Activated CD4-positive, alpha-beta T cell treated with anti-CD3 and anti-CD28 coated beads, Interleukin-2, amount 10 ng/mL, durations not matched to agents 24 days and 14 days (primary cell): ENCODE measurements at regions of chr16 and their contacts with region 1.

Region 1: DNA sequence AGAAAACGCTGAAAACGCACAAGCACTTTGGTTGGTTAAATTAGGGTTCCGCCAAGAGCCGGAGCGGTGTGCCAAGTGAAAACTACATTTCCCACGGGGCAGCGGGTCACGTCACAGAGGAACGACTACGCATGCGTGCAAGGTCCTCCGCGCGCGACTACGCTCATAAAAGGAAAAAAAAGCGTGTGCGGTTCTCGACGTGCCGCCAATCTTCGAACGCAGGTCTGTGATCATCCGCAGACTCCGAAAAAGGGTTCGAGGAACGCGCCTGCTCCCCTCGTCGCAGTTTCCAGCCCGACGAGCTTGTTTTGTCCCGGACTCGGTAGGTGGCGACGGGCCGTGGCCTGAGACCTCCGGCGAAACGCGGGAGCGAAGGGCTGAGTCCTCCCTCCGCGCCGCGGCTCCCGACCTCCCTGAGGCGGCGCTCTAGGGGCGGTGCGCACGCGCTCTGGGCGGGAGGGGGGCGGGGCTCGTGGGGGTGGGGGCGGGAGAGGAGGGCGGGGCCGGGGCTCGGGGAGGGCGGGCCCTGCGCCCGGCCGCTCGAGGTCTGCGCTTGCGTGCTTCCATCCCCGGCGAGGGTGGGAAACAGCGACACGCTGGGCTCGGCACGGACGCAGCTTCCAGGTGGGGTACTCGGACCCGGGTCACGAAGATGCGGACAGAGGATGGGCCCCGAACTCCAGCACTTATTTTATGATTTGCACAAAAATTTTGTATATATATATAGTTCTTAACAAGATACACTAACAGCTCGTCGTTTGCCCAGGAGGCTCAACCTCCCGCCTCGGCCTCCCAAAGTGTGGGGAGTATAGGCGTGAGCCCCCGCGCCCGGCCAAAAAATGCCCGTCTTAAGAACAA is at the start of gene SGF29:
- DNase-seq: peak; percentile 98
- H3K4me3 Mint-ChIP-seq: peak within 1 kb of the TSS; percentile 95
- H3K27ac Mint-ChIP-seq: peak within 1 kb of the TSS; percentile 99
- H3K4me1 Mint-ChIP-seq: peaks cover 26% of the 10 kb centered on the region
- H3K27me3 Mint-ChIP-seq: no peaks in the 10 kb centered on the region
- total RNA-seq, gene SGF29: 33.6 and 42.5 TPM in 2 replicates

Region 2: GRCh38 chr16:28291873-28292660 is 261.9 kb before region 1 on chr16 and contains the start of gene SBK1:
- intact Hi-C with region 1: loop called (anchors 10 kb)
- DNase-seq: peak; percentile 96
- H3K4me3 Mint-ChIP-seq: peak within 1 kb of the TSS; percentile 83
- H3K27ac Mint-ChIP-seq: peak within 1 kb of the TSS; percentile 70
- H3K4me1 Mint-ChIP-seq: peaks cover 42% of the 10 kb centered on the region
- H3K27me3 Mint-ChIP-seq: peaks cover 26% of the 10 kb centered on the region
- total RNA-seq, gene SBK1: 0.85 and 1.5 TPM in 2 replicates

Region 3: DNA sequence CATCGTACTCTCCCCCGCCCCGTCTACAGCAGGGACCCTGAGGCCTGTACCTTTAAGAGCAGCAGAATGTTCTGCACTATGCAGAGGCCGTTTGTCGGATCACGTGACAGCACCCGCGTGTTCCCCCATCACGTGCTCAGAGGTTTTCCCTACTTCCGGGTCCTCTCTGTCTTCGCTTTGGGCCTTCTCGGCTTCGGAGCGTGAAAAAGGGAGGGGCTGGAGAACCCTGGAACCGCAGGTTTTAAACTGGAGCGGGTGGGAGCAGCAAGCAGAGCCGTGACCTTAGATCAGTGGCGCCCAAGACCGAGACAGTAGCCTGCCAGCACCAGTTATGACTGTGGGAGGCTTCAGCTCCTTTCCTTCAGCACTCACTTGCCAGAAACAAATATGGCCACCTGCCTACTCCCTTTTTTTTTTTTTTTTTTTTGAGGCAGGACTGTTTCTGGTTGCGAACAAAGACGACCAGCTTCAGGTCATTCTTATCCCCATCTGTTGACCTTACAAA is 62.0 kb before region 1 on chr16 and contains the start of gene CLN3:
- intact Hi-C with region 1: loop called (anchors 1 kb)
- DNase-seq: peak; percentile 96
- H3K4me3 Mint-ChIP-seq: peak within 1 kb of the TSS; percentile 97
- H3K27ac Mint-ChIP-seq: peak within 1 kb of the TSS; percentile 100
- H3K4me1 Mint-ChIP-seq: peaks cover 59% of the 10 kb centered on the region
- H3K27me3 Mint-ChIP-seq: no peaks in the 10 kb centered on the region
- total RNA-seq, gene CLN3: 26.1 and 27.7 TPM in 2 replicates

Region 4: DNA sequence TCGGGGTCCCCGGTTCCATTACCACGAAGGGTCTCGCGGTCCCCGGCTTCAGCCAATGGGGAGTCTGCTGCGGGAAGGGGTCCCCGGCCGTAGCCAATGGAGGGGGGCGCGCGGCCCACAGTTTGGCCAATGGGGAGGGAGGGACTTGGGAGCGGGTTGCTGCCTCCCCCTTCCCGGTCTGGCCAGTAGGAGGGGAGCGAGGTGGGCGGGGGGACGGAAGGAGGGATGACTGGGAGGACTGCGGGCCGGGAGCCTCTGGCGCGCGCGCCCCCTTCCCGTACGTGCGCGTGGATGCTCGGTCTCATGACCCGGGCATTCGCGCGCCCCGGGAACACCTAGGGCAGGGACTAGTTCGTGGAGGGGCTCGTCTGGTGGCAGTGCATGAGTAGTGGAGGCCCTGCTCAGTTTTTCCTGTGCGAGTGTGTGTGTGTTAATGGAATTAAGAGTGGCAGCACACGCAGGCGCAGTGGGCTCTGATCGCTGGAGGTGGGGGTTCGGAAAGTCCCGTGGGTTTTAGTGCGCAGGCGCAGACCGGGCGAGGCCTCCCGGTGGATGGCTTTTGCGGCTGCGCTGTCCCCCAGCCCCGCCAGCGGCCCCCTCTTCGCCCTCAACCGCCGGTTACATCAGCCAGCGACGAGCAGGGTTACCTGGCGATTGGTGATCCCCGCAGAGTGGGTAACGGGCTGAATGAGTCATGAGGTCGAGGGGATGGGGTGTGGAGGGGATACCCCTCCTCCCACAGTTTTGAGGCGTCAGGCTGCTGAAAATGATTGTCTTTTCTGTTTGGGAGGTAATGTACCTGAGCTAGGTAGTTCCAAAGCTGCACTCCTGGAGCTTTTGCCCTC is 270.1 kb after region 1 on chr16:
- intact Hi-C with region 1: loop called (anchors 10 kb)
- DNase-seq: peak; percentile 98
- H3K4me3 Mint-ChIP-seq: peak overlapping the region; percentile 100
- H3K27ac Mint-ChIP-seq: peak overlapping the region; percentile 100
- H3K4me1 Mint-ChIP-seq: peaks cover 47% of the 10 kb centered on the region
- H3K27me3 Mint-ChIP-seq: peaks cover 2% of the 10 kb centered on the region

Region 5: DNA sequence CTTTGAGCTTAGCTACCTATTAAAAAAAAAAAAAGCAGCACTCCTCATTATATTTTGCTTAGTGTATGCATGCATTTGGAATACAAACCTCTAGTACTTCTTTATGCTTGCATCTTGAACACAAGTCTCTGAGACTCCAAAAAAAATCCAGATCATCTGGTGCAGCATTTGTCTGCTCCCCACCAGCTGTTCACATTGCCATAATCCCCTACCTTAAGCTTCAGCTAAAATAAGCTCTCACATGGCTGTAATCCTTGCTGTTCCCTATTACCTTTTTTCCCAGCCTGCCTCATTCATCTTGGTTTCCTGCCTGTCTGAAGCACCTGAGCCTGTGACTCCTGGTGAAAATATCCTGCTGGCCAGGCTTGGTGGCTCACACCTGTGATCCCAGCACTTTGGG is 389.3 kb after region 1 on chr16:
- intact Hi-C with region 1: loop called (anchors 5 kb)
- DNase-seq: no peak
- H3K4me3 Mint-ChIP-seq: no peak overlapping the region
- H3K27ac Mint-ChIP-seq: no peak overlapping the region
- H3K4me1 Mint-ChIP-seq: peaks cover 15% of the 10 kb centered on the region
- H3K27me3 Mint-ChIP-seq: peaks cover 2% of the 10 kb centered on the region